Right cardiac atrium (tissue), 5 donors: ENCODE measurements at regions of chr20 and their contacts with region 1.

Region 1: DNA sequence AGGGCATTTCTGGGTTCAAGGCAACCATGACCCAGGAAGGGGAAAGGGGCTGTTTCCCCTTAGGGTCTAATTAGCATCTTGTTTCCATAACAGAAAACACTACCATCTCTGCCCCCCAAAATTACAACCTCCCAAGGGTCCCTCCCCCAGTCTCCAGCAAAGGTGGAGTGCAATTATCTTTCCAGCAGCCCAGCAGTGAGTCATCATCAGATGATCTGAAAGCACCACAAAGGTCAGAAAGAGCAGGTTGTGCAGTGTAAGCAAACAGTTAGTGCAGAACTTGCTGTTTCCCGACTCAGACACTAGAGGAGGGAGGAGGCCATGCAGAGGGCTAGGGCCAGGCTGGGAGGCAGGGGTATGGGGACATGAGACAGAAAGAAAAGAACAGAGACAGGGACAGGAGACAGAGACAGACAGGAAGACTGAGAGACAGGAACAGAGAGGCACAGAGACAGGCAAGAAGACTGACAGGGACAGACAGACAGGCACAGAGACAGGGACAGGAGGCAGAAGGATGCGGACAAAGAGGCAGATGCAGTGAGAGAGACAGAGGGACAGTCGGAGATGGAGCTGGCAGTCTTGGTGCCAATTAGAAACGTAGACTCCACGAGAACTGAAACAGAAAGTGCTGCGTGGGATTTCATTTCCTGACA is 62.5 kb downstream of the PYGB start:
- DNase-seq: peak in 2 of 3 donors; percentile 27 to 72
- ATAC-seq: peak; percentile 77 to 87
- H3K4me3 ChIP-seq: no peak overlapping the region
- H3K27ac ChIP-seq: peak overlapping the region; percentile 70
- H3K4me1 ChIP-seq: peaks cover 17% of the 10 kb centered on the region
- H3K27me3 ChIP-seq: no peaks in the 10 kb centered on the region

Region 2: GRCh38 chr20:24470746-24471582 is 839.4 kb before region 1 on chr20:
- intact Hi-C with region 1: no loop called
- DNase-seq: peak in 2 of 3 donors; percentile 21 to 56
- ATAC-seq: peak; percentile 33 to 66
- H3K4me3 ChIP-seq: peak overlapping the region; percentile 57
- H3K27ac ChIP-seq: peak overlapping the region; percentile 12
- H3K4me1 ChIP-seq: no peaks in the 10 kb centered on the region
- H3K27me3 ChIP-seq: no peaks in the 10 kb centered on the region

Region 3: GRCh38 chr20:25372584-25373336 is 62.4 kb after region 1 on chr20:
- intact Hi-C with region 1: no loop called
- DNase-seq: no peak
- ATAC-seq: no peak
- H3K4me3 ChIP-seq: no peak overlapping the region
- H3K27ac ChIP-seq: no peak overlapping the region
- H3K4me1 ChIP-seq: peaks cover 3% of the 10 kb centered on the region
- H3K27me3 ChIP-seq: no peaks in the 10 kb centered on the region

Region 4: GRCh38 chr20:25390538-25391528 is 80.4 kb after region 1 on chr20 and contains the start of gene ABHD12:
- intact Hi-C with region 1: loop called in 1 of 4 experiments (anchors 10 kb)
- DNase-seq: peak; percentile 97 to 99 (median 99)
- ATAC-seq: peak; percentile 99 to 100
- H3K4me3 ChIP-seq: peak within 1 kb of the TSS; percentile 75
- H3K27ac ChIP-seq: peak within 1 kb of the TSS; percentile 85
- H3K4me1 ChIP-seq: no peaks in the 10 kb centered on the region
- H3K27me3 ChIP-seq: no peaks in the 10 kb centered on the region
- total RNA-seq, gene ABHD12: 22.6 to 28.3 (median 26.0) TPM